MCF 10A (cell line): ENCODE measurements at regions of chr2 and their contacts with region 1.

Region 1: DNA sequence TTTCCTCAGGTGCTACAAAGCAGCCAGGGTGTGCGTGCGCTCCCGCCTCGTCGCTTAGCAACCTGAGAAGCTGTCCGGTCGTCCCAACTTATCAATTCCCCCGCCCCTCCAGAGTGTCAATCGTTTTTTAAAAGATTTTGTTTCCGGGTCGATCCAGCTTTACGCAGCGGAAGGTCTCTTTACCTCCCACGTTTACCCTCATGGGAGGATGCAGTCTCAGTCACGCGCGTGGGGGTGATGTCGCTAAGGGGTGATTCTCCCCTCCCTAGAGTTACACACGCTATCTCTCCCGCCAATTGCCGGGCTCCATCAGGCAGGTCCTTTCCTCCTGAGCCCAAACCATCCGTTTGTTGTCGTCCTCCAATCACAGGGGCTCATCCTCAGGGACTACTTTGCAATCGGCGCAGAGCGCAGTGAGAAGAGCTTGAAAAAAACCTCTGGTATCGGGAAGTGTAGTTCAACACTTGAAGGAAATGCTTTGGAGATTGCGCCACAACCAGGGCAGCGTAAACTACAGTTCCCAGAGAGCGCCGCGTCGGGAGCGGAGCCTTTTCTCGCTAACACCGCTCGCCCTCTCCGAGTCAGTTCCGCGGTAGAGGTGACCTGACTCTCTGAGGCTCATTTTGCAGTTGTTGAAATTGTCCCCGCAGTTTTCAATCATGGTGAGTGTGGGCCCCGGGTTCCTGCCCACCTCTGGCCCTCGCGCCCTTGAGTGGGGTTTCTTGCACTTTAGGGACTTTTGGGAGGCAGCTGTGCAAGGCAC is at the starts of genes MDH1 and WDPCP:
- DNase-seq: peak; percentile 99
- H3K4me3 Mint-ChIP-seq: peak within 1 kb of the TSS; percentile 98
- H3K27ac Mint-ChIP-seq: peak within 1 kb of the TSS; percentile 94
- H3K4me1 Mint-ChIP-seq: peaks cover 19% of the 10 kb centered on the region
- H3K27me3 Mint-ChIP-seq: no peaks in the 10 kb centered on the region
- CTCF ChIP-seq: no peak
- total RNA-seq, gene MDH1: 105 and 110 TPM in 2 replicates
- total RNA-seq, gene WDPCP: 6.9 and 8.0 TPM in 2 replicates

Region 2: GRCh38 chr2:63249146-63249545 is 339.4 kb before region 1 on chr2:
- CTCF ChIA-PET with region 1: no interaction called
- POLR2A ChIA-PET with region 1: no interaction called
- intact Hi-C with region 1: no loop called
- DNase-seq: no peak
- H3K4me3 Mint-ChIP-seq: no peak overlapping the region
- H3K27ac Mint-ChIP-seq: no peak overlapping the region
- H3K4me1 Mint-ChIP-seq: no peaks in the 10 kb centered on the region
- H3K27me3 Mint-ChIP-seq: no peaks in the 10 kb centered on the region
- CTCF ChIP-seq: no peak

Region 3: GRCh38 chr2:63477686-63478085 is 110.9 kb before region 1 on chr2:
- CTCF ChIA-PET with region 1: no interaction called
- POLR2A ChIA-PET with region 1: no interaction called
- intact Hi-C with region 1: no loop called
- DNase-seq: no peak
- H3K4me3 Mint-ChIP-seq: no peak overlapping the region
- H3K27ac Mint-ChIP-seq: no peak overlapping the region
- H3K4me1 Mint-ChIP-seq: no peaks in the 10 kb centered on the region
- H3K27me3 Mint-ChIP-seq: no peaks in the 10 kb centered on the region
- CTCF ChIP-seq: no peak

Region 4: DNA sequence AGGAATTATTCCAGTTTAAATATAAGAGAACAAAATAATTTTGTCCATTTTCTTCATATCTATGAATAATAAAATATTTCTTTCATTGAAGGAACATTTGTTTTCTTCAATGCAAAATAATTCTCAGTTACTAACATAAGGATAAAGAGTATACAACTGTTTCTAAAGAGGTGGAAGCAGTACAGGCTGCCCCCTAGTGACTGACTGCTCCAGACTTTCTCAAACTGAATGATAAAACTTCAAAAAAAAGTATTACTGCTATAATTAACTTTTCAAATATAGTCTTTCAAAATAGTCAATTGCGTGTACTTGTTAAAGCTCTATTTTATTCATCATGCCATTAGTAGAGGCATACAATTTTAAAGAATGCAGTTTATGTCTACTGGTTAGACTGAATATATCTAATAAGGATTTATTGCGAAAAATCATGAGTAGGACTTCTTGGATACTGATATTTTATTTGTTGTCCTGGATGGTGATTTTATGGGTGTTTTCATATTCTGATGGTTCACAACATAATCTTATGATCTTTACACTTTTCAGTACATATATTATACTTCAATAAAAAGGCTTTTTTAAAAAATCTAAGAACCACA is 100.3 kb before region 1 on chr2:
- CTCF ChIA-PET with region 1: no interaction called
- POLR2A ChIA-PET with region 1: no interaction called
- intact Hi-C with region 1: no loop called
- DNase-seq: peak; percentile 46
- H3K4me3 Mint-ChIP-seq: no peak overlapping the region
- H3K27ac Mint-ChIP-seq: no peak overlapping the region
- H3K4me1 Mint-ChIP-seq: no peaks in the 10 kb centered on the region
- H3K27me3 Mint-ChIP-seq: no peaks in the 10 kb centered on the region
- CTCF ChIP-seq: peak; percentile 54

Region 5: GRCh38 chr2:63576546-63576945 is 12.0 kb before region 1 on chr2:
- CTCF ChIA-PET with region 1: no interaction called
- POLR2A ChIA-PET with region 1: interaction called, 36 read pairs
- intact Hi-C with region 1: no loop called
- DNase-seq: no peak
- H3K4me3 Mint-ChIP-seq: no peak overlapping the region
- H3K27ac Mint-ChIP-seq: no peak overlapping the region
- H3K4me1 Mint-ChIP-seq: peaks cover 12% of the 10 kb centered on the region
- H3K27me3 Mint-ChIP-seq: no peaks in the 10 kb centered on the region
- CTCF ChIP-seq: no peak

Region 6: DNA sequence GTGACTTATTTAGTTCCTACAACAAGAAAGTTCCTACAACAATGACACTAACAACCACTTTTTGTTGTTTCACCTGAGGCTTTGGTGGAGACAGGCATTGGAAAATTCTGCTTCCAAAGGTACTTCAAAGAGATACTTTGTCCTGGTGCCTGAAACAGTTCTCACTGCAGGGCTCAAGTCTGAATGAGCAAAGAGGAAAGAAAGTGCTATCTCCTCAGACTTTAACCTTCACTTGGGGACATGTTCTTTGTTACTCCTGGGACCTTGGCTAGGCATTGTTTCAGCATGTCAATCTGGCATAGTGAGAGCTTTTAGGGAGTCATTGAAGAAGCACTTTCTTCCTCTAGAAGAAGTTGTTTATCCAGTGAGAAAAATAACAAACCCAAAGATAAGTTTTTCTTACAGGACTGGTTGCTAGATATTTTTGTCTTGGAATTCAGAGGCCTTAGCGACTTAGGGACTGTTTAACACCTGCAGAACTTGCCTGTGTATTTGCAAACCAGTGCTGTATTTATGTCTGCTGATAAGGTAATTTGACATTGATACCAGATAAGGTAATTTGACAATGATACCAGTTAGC is 12.4 kb after region 1 on chr2:
- CTCF ChIA-PET with region 1: no interaction called
- POLR2A ChIA-PET with region 1: interaction called, 44 read pairs
- intact Hi-C with region 1: no loop called
- DNase-seq: no peak
- H3K4me3 Mint-ChIP-seq: no peak overlapping the region
- H3K27ac Mint-ChIP-seq: peak overlapping the region; percentile 77
- H3K4me1 Mint-ChIP-seq: no peaks in the 10 kb centered on the region
- H3K27me3 Mint-ChIP-seq: no peaks in the 10 kb centered on the region
- CTCF ChIP-seq: no peak

Region 7: GRCh38 chr2:63614983-63615945 is 26.7 kb after region 1 on chr2:
- CTCF ChIA-PET with region 1: no interaction called
- POLR2A ChIA-PET with region 1: interaction called, 14 read pairs
- intact Hi-C with region 1: no loop called
- DNase-seq: peak; percentile 40
- H3K4me3 Mint-ChIP-seq: peak overlapping the region; percentile 55
- H3K27ac Mint-ChIP-seq: peak overlapping the region; percentile 90
- H3K4me1 Mint-ChIP-seq: peaks cover 14% of the 10 kb centered on the region
- H3K27me3 Mint-ChIP-seq: no peaks in the 10 kb centered on the region
- CTCF ChIP-seq: no peak

Region 8: GRCh38 chr2:63861220-63861822 is 272.8 kb after region 1 on chr2:
- CTCF ChIA-PET with region 1: no interaction called
- POLR2A ChIA-PET with region 1: interaction called, 6 read pairs
- intact Hi-C with region 1: loop called (anchors 5 kb)
- DNase-seq: peak; percentile 67
- H3K4me3 Mint-ChIP-seq: no peak overlapping the region
- H3K27ac Mint-ChIP-seq: peak overlapping the region; percentile 69
- H3K4me1 Mint-ChIP-seq: peaks cover 22% of the 10 kb centered on the region
- H3K27me3 Mint-ChIP-seq: no peaks in the 10 kb centered on the region
- CTCF ChIP-seq: peak; percentile 60

Region 9: DNA sequence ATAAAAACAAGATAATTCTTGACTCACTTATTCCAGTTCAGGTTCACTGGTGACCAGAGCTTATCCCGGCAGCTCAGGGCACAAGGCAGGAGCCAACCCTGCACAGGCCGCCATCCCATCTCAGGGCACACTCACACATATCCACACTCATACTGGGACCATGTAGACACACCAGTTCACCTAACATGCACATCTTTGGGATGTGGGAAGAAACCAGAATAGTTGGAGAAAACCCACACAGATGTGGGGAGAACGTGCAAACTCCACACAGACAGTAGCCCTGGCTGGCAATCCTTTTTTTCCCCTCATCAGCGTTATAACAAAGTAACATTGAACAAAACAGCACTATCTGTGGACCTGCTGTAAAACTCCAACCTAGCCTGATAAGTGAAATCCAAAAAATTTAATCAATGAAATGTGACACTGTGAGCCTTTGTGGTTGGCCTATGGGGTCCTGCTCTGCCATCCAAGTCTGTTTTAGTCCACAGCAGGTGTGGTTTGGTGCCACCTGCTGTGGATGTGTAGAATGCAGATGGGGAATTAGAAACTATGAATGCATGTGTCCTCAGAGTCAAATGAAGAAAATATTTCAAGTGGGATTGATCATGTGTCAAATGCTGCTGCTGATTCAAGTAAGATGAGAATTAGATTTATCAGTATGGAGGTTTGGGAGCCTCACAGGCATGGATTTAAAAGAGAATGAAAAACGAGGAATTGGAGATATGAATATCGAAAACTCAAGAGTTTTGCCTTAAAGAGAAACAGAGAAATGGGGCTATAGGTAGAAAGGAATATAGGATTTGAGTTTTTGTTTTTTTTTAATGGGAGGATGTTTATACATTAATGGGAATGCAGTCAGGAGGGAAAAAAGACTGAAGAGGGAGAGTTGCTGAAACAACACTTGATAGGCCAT is 300.2 kb after region 1 on chr2:
- CTCF ChIA-PET with region 1: no interaction called
- POLR2A ChIA-PET with region 1: interaction called, 6 read pairs
- intact Hi-C with region 1: loop called (anchors 10 kb)
- DNase-seq: peak; percentile 67
- H3K4me3 Mint-ChIP-seq: no peak overlapping the region
- H3K27ac Mint-ChIP-seq: peak overlapping the region; percentile 17
- H3K4me1 Mint-ChIP-seq: peaks cover 5% of the 10 kb centered on the region
- H3K27me3 Mint-ChIP-seq: no peaks in the 10 kb centered on the region
- CTCF ChIP-seq: peak; percentile 71

Region 10: DNA sequence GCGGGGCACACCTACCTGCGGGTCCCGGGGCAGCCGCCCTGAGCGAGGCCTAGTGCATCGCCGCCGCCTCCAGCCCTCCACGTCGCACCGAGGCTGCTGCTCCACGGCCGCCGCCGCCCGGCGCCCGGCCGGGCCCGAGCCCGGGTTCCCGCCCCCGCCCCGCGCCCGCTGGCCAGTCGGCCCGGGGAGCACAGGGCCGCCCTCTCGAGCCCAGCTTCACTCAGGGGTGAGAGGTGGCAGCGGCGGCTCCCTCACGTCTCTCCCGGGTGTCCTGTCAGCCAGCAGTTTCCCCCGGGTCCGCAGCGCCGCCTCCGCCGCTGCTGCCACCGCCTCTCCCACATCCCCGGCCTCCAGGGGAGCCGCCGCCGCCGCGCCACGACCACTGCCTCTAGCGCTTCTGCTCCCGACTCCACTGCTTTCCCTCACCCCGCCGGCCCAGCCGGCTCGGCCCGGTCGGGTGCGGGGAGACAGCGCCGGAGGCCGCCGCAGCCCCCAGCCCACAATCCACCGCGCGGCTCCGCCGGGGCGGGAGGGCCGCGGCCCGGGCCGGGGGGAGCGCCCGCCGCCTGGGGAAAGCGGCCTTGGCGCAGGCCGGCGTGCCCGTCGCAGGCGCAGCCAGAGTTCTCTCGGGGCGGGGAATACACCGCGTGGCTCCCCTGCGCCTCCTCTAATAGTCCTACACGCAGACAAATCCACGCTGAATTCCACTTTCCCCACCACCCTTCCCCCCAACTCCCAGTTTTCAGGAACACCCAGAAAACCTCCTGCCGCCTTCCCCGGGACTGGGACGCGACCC is 430.6 kb after region 1 on chr2 and contains the start of gene VPS54:
- CTCF ChIA-PET with region 1: no interaction called
- POLR2A ChIA-PET with region 1: interaction called, 10 read pairs
- intact Hi-C with region 1: no loop called
- DNase-seq: peak; percentile 50
- H3K4me3 Mint-ChIP-seq: peak within 1 kb of the TSS; percentile 96
- H3K27ac Mint-ChIP-seq: peak within 1 kb of the TSS; percentile 98
- H3K4me1 Mint-ChIP-seq: peaks cover 21% of the 10 kb centered on the region
- H3K27me3 Mint-ChIP-seq: no peaks in the 10 kb centered on the region
- CTCF ChIP-seq: no peak
- total RNA-seq, gene VPS54: 13.1 and 16.5 TPM in 2 replicates